BJ (cell line): ENCODE measurements at regions of chr3 and their contacts with region 1.

Region 1: GRCh38 chr3:160941885-160942494 is 163.2 kb downstream of the B3GALNT1 start:
- DNase-seq: no peak
- H3K4me3 ChIP-seq: no peak overlapping the region
- H3K27me3 ChIP-seq: no peaks in the 10 kb centered on the region; the same call in 1 of the 2 replicates
- CTCF ChIP-seq: peak; percentile 85

Region 2: DNA sequence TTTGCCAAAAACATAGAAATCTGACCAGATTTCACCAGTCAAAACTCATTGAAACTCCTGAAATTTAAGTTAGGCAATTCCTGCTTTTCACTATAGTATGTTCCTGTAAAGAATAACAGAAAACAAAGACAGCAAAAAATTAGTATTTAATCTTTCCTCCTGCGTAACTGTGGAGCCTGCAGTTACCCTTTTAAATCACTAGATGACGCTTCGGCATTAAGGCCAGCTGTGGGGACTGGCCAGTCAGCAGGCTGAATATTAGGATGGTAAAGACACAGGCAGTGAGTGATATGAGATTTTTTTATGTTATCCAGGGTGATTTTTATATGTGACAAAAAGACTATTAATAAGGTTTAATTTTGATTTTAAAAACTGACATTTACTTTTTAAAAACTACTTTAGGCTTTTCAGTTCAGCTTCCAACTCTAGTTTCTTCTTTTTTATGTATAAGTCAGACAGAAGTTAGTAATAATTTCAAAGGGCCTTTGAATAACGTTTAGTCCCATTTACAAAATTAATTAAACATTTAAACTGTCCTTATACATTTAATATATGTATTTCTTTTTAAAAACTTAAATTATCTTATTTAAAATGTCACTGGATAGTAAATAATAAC is 20.9 kb before region 1 on chr3:
- CTCF ChIA-PET with region 1: interaction called, 48 read pairs
- POLR2A ChIA-PET with region 1: interaction called, 3 read pairs
- DNase-seq: no peak
- H3K4me3 ChIP-seq: no peak overlapping the region
- H3K27me3 ChIP-seq: no peaks in the 10 kb centered on the region
- CTCF ChIP-seq: peak; percentile 89

Region 3: DNA sequence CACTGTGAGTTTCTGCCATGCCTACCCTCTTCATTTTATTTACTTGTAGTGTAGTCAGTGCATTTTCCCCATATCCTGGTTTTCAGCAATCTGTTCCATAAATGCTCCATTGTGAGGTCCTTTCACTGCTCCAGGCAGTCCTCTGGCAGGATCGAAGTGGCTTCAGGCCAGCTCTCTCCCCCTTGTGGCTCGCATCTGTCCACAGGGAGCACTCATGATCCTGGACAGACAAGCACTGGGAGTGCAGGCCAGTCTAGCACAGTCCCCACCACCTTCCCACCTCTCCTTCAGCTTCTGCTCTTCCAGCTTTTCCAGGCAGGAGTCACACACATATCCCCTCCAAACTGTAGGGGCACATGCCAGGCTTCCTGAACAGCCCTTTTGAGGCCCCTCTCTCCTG is 12.4 kb before region 1 on chr3:
- CTCF ChIA-PET with region 1: interaction called, 24 read pairs
- POLR2A ChIA-PET with region 1: no interaction called
- DNase-seq: no peak
- H3K4me3 ChIP-seq: no peak overlapping the region
- H3K27me3 ChIP-seq: no peaks in the 10 kb centered on the region
- CTCF ChIP-seq: peak; percentile 25; the same call in 1 of the 2 replicates